ENCODE measurements at regions of chr1 and their contacts with region 1.

Region 1: GRCh38 chr1:28248283-28249012 is 10.9 kb upstream of the SESN2 start:
- DNase-seq: peak; percentile 88
- H3K4me3 ChIP-seq: peak overlapping the region; percentile 72
- H3K27ac ChIP-seq: peak overlapping the region; percentile 88
- H3K4me1 ChIP-seq: peaks cover 58% of the 10 kb centered on the region
- CTCF ChIP-seq: peak; percentile 100

Region 2: GRCh38 chr1:27574871-27575831 is 673.3 kb before region 1 on chr1:
- CTCF ChIA-PET with region 1: no interaction called
- POLR2A ChIA-PET with region 1: no interaction called
- intact Hi-C with region 1: no loop called
- DNase-seq: no peak
- H3K4me3 ChIP-seq: no peak overlapping the region
- H3K27ac ChIP-seq: no peak overlapping the region
- H3K4me1 ChIP-seq: peaks cover 17% of the 10 kb centered on the region
- CTCF ChIP-seq: peak; percentile 43; the same call in 1 of the 2 replicates

Region 3: GRCh38 chr1:28235755-28236655 is 12.4 kb before region 1 on chr1 and contains the start of gene ATP5IF1:
- CTCF ChIA-PET with region 1: interaction called, 3 read pairs
- POLR2A ChIA-PET with region 1: interaction called, 71 read pairs
- intact Hi-C with region 1: no loop called
- DNase-seq: peak; percentile 98
- H3K4me3 ChIP-seq: peak within 1 kb of the TSS; percentile 84
- H3K27ac ChIP-seq: peak within 1 kb of the TSS; percentile 56
- H3K4me1 ChIP-seq: peaks cover 50% of the 10 kb centered on the region
- CTCF ChIP-seq: no peak
- total RNA-seq, gene ATP5IF1: 410 and 604 TPM in 2 replicates

Region 4: DNA sequence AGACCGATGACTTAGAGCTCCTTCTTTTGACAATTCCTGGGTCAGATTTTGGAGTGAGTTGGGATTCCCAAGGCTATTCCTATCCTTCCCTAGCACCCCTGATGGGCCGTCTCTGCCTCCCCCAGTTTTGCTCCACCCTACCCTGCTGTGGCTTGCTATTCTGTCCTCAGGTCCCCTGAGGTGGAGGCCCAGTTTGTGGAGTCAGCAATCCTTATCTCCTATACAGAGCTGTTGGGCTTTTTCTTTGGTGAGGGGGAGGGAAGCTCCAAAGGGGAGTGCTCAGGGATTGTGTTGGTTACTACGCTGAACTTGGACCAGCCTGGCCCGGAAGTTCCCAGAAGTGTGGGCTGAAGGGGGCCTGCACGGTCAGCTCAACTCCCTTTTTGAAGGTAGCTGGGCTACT is 18.5 kb after region 1 on chr1:
- CTCF ChIA-PET with region 1: interaction called, 3 read pairs
- POLR2A ChIA-PET with region 1: interaction called, 27 read pairs
- intact Hi-C with region 1: no loop called
- DNase-seq: no peak
- H3K4me3 ChIP-seq: no peak overlapping the region
- H3K27ac ChIP-seq: no peak overlapping the region
- H3K4me1 ChIP-seq: peaks cover 2% of the 10 kb centered on the region
- CTCF ChIP-seq: no peak

Region 5: DNA sequence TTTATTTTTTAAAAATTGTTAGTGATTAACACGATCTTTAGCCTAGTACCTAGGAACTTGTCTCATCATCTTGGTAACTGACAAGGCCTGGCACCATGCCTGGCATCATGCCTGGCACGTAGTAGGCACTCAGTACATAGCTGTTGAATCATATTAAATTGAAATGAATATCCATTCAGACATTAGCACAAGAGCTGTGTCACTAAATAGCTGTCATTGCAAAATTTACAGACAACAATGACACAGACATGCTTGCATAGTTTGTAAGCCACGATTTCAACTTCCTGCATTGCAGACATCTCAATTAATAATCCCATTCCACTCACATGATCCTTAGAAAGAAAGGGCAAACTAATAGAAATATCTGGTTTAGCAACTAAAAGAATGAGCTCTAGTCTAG is 105.7 kb after region 1 on chr1:
- CTCF ChIA-PET with region 1: interaction called, 3 read pairs
- POLR2A ChIA-PET with region 1: interaction called, 11 read pairs
- intact Hi-C with region 1: no loop called
- DNase-seq: no peak
- H3K4me3 ChIP-seq: no peak overlapping the region
- H3K27ac ChIP-seq: no peak overlapping the region
- H3K4me1 ChIP-seq: no peaks in the 10 kb centered on the region
- CTCF ChIP-seq: no peak

Region 6: GRCh38 chr1:28505406-28506187 is 257.1 kb after region 1 on chr1 and contains the start of gene RCC1:
- CTCF ChIA-PET with region 1: no interaction called
- POLR2A ChIA-PET with region 1: interaction called, 6 read pairs
- intact Hi-C with region 1: loop called (anchors 2 kb)
- DNase-seq: peak; percentile 99
- H3K4me3 ChIP-seq: peak within 1 kb of the TSS; percentile 85
- H3K27ac ChIP-seq: peak within 1 kb of the TSS; percentile 94
- H3K4me1 ChIP-seq: peaks cover 42% of the 10 kb centered on the region
- CTCF ChIP-seq: no peak
- total RNA-seq, gene RCC1: 87.6 and 101 TPM in 2 replicates

Region 7: DNA sequence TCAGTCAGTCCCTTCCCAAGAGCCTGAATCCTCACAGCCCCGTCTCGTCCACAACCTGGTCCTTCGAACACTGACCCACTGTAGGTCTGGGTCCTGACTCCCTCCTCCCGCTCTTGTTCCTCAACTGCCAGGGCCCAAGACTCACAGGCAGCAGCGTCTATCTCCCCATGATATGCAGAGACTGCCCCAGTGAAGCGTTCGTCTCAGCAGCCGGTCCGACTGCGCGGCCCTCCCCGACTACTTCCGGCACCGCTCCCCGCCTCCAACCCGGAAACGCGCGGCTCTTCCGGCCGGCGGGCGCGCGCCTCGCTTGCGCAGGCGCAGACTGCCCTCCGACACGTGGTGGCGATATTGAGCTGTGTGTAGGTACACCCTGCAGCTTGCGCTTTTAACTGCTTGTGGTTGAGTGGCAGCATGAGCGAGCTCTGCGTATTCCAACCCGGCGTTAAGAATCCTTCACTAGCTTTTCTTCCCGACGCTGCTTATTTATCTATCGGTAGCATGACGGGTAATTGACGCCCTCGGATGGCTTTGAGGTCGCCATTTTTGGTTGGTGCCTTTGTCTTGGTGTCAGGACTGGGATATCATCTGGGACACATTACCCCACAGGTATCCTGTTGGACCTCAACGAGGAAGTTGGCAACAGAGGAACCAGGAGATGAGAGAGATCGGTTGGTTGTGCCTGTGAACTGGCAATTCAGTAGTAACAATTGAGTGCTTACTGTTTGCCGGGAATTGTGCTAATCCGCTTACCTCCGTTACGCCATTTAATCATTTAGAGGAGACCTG is 394.6 kb after region 1 on chr1 and contains the start of gene TAF12:
- CTCF ChIA-PET with region 1: no interaction called
- POLR2A ChIA-PET with region 1: interaction called, 4 read pairs
- intact Hi-C with region 1: loop called (anchors 5 kb)
- DNase-seq: peak; percentile 98
- H3K4me3 ChIP-seq: peak within 1 kb of the TSS; percentile 86
- H3K27ac ChIP-seq: peak within 1 kb of the TSS; percentile 95
- H3K4me1 ChIP-seq: peaks cover 39% of the 10 kb centered on the region
- CTCF ChIP-seq: peak; percentile 72
- total RNA-seq, gene TAF12: 30.1 and 31.0 TPM in 2 replicates